Common myeloid progenitor, CD34-positive (primary cell): ENCODE measurements at regions of chr21 and their contacts with region 1.

Region 1: DNA sequence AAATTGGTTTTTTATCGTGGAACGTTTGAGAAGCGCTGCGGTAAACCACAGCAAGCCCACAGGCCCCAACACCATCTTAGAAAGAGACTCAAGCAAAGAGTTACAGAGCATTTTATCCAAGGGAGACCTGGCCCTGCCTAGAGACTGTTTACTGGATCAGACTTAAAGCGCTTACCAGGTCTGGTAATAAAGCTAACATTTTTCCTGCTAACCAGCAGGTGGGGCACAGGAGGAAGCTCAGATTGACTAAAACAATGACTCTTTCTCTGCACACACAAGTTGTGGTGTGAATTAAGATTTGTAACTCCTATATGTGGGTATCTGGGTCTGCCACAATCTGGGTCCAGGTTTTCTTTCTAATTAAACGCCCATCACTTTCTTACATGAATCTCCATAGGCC is 136.6 kb upstream of the ETS2 start:
- DNase-seq: peak; percentile 46 to 80 (median 78)
- H3K4me3 ChIP-seq: no peak overlapping the region
- H3K27ac ChIP-seq: no peak overlapping the region
- H3K4me1 ChIP-seq: peaks cover 0 to 5% (median 0%) of the 10 kb centered on the region in 4 experiments
- H3K27me3 ChIP-seq: peaks cover 0 to 3% (median 0%) of the 10 kb centered on the region in 5 experiments

Region 2: GRCh38 chr21:38712071-38712470 is 42.9 kb after region 1 on chr21:
- CTCF ChIA-PET with region 1: interaction called, 18 read pairs
- POLR2A ChIA-PET with region 1: no interaction called
- DNase-seq: peak; percentile 51 to 55 (median 52)
- H3K4me3 ChIP-seq: no peak overlapping the region
- H3K27ac ChIP-seq: no peak overlapping the region
- H3K4me1 ChIP-seq: peaks cover 0 to 17% (median 9%) of the 10 kb centered on the region in 4 experiments
- H3K27me3 ChIP-seq: no peaks in the 10 kb centered on the region

Region 3: GRCh38 chr21:39132248-39132647 is 463.1 kb after region 1 on chr21:
- CTCF ChIA-PET with region 1: interaction called, 12 read pairs
- POLR2A ChIA-PET with region 1: no interaction called
- DNase-seq: no peak
- H3K4me3 ChIP-seq: no peak overlapping the region
- H3K27ac ChIP-seq: no peak overlapping the region
- H3K4me1 ChIP-seq: peaks cover 0 to 23% (median 5%) of the 10 kb centered on the region in 4 experiments
- H3K27me3 ChIP-seq: no peaks in the 10 kb centered on the region